ENCODE measurements at regions of chr3 and their contacts with region 1.

Region 1: DNA sequence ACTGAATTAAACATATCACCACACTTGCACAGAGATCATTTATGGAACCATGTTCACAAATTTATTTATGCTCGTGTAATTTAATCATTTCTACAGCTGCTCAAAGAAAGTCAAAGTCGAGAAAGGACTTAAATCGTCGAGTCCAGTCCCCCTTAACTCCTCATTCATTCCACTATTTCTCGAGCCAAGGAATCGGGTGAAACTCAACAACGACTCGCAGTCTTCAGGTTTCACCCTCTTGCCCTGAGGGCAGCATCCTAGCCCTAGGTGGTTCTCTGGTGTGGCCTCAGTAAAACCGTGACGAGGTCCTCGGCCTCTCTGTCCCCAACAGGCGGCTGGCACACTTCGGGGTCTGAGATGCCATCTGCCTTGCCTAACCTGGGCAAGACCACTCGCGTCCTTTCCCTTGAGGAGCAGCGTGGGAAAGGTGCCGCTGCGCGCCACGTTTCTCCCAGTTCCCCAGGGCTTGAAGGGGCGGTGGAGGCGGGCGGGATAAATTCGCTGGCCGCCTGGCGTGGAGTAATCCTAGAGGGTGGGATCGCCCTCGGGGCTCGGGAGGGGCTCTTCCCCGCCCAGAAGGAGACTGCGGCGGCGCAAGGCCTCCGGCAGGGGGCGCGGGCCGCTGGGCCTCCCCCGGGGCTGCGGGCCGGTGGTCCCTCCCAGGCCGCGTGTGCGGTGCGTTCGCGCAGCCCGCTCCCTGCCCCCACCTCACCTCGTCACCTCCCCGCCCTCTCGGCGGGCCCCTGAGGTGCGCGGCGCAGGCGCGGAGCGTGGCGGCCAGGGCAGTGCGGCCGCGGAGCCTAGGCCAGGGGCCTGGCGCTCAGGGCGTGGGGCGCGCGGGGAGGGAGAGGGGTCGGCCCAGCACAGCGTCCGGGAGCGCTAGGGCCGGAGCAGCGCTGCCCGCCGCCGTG is at the start of gene ZNF639:
- DNase-seq: peak; percentile 87 to 94 (median 94)
- ATAC-seq: peak; percentile 94 to 95
- H3K4me3 ChIP-seq: peak within 1 kb of the TSS; percentile 56
- H3K27ac ChIP-seq: peak within 1 kb of the TSS; percentile 93
- H3K4me1 ChIP-seq: no peaks in the 10 kb centered on the region
- H3K27me3 ChIP-seq: no peaks in the 10 kb centered on the region
- total RNA-seq, gene ZNF639: 31.0 to 42.9 (median 34.2) TPM

Region 2: GRCh38 chr3:179015551-179016020 is 307.0 kb before region 1 on chr3:
- intact Hi-C with region 1: loop called in 3 of 4 experiments (anchors 2 to 10 kb)
- DNase-seq: no peak
- ATAC-seq: peak; percentile 74 to 81
- H3K4me3 ChIP-seq: no peak overlapping the region
- H3K27ac ChIP-seq: no peak overlapping the region
- H3K4me1 ChIP-seq: peaks cover under 1% of the 10 kb centered on the region
- H3K27me3 ChIP-seq: no peaks in the 10 kb centered on the region

Region 3: GRCh38 chr3:179098388-179099077 is 224.0 kb before region 1 on chr3:
- intact Hi-C with region 1: loop called in 3 of 4 experiments (anchors 5 to 10 kb)
- DNase-seq: no peak
- ATAC-seq: no peak
- H3K4me3 ChIP-seq: no peak overlapping the region
- H3K27ac ChIP-seq: no peak overlapping the region
- H3K4me1 ChIP-seq: peaks cover 2% of the 10 kb centered on the region
- H3K27me3 ChIP-seq: no peaks in the 10 kb centered on the region

Region 4: GRCh38 chr3:179113903-179114302 is 208.6 kb before region 1 on chr3:
- intact Hi-C with region 1: loop called in 3 of 4 experiments (anchors 5 to 10 kb)
- DNase-seq: no peak
- ATAC-seq: no peak
- H3K4me3 ChIP-seq: no peak overlapping the region
- H3K27ac ChIP-seq: no peak overlapping the region
- H3K4me1 ChIP-seq: no peaks in the 10 kb centered on the region
- H3K27me3 ChIP-seq: no peaks in the 10 kb centered on the region

Region 5: GRCh38 chr3:179147873-179148615 is 174.5 kb before region 1 on chr3 and contains the start of gene PIK3CA:
- intact Hi-C with region 1: loop called in 3 of 4 experiments (anchors 5 to 10 kb)
- DNase-seq: peak; percentile 96
- ATAC-seq: peak; percentile 98
- H3K4me3 ChIP-seq: peak within 1 kb of the TSS; percentile 95
- H3K27ac ChIP-seq: peak within 1 kb of the TSS; percentile 91
- H3K4me1 ChIP-seq: no peaks in the 10 kb centered on the region
- H3K27me3 ChIP-seq: no peaks in the 10 kb centered on the region
- total RNA-seq, gene PIK3CA: 20.7 to 22.3 (median 21.7) TPM

Region 6: GRCh38 chr3:179272385-179272784 is 50.2 kb before region 1 on chr3:
- intact Hi-C with region 1: no loop called
- DNase-seq: peak in 1 of 3 donors; percentile 39
- ATAC-seq: no peak
- H3K4me3 ChIP-seq: no peak overlapping the region
- H3K27ac ChIP-seq: no peak overlapping the region
- H3K4me1 ChIP-seq: no peaks in the 10 kb centered on the region
- H3K27me3 ChIP-seq: no peaks in the 10 kb centered on the region

Region 7: GRCh38 chr3:179562591-179563270 is 240.2 kb after region 1 on chr3 and contains the start of gene ACTL6A:
- intact Hi-C with region 1: loop called in 2 of 4 experiments (anchors 5 to 10 kb)
- DNase-seq: peak; percentile 100
- ATAC-seq: peak; percentile 99
- H3K4me3 ChIP-seq: peak within 1 kb of the TSS; percentile 85
- H3K27ac ChIP-seq: peak within 1 kb of the TSS; percentile 77
- H3K4me1 ChIP-seq: no peaks in the 10 kb centered on the region
- H3K27me3 ChIP-seq: no peaks in the 10 kb centered on the region
- total RNA-seq, gene ACTL6A: 16.1 to 25.0 (median 19.7) TPM